SK-N-SH (cell line): ENCODE measurements at regions of chrX and their contacts with region 1.

Region 1: DNA sequence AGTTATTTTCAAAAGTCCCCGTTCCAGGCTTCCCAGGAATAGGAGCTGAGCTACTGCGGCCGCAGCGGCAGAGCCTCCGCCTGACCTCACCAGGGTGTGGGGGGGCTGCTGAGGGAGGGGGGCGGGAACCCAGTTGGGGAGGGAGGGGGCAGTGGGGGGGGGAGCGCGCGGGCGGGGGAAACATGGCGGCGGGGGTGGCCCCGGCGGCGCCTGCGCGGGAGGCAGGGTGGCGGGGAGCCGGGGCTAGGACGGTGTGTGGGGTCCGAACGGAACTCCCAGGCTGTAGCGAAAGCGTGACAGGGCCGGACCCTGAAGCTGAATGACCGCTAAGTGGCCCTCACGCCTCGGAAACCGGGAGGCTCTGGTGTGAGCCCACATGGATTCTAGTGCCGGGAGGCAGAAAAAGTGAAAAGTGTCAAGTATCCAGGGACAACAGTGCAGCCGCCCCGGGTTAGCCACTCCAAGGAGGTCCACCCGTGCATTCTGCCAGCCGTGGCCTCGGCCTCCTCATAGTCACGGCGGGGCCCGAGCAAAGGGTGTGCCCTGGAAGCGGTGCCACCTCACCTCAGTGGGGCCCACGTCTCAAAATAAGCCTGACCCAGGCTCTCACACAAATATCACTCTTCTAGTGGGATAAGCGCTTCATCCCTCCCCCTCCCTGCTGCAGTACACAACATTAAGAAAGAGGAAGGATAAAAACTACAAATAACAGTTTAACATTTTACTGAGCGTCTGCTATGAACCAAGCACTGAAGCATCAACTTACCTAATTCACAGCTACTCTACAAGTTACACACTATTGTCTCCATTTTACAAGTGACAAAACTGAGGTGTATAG is at the start of gene KLHL13:
- DNase-seq: peak; percentile 92
- H3K4me3 ChIP-seq: peak within 1 kb of the TSS; percentile 67 to 73
- H3K27ac ChIP-seq: peak within 1 kb of the TSS; percentile 78 to 94
- H3K4me1 ChIP-seq: peaks cover 0 to 5% of the 10 kb centered on the region in 2 experiments; a peak in 2 of 4 replicates
- H3K27me3 ChIP-seq: no peaks in the 10 kb centered on the region
- CTCF ChIP-seq: no peak
- EP300 ChIP-seq: no peak
- RAD21 ChIP-seq: peak; percentile 73
- polyA plus RNA-seq, gene KLHL13: 19.5 and 27.6 TPM in 2 replicates

Region 2: GRCh38 chrX:118088084-118088483 is 28.8 kb before region 1 on chrX:
- CTCF ChIA-PET with region 1: no interaction called
- POLR2A ChIA-PET with region 1: no interaction called
- DNase-seq: no peak
- H3K4me3 ChIP-seq: no peak overlapping the region
- H3K27ac ChIP-seq: no peak overlapping the region
- H3K4me1 ChIP-seq: peaks cover 0 to 3% of the 10 kb centered on the region in 2 experiments; a peak in 1 of 4 replicates
- H3K27me3 ChIP-seq: no peaks in the 10 kb centered on the region
- CTCF ChIP-seq: no peak
- EP300 ChIP-seq: no peak
- RAD21 ChIP-seq: no peak

Region 3: GRCh38 chrX:118226090-118226428 is 109.1 kb after region 1 on chrX:
- CTCF ChIA-PET with region 1: interaction called, 10 read pairs
- POLR2A ChIA-PET with region 1: interaction called, 10 read pairs
- DNase-seq: peak; percentile 35
- H3K4me3 ChIP-seq: peak overlapping the region in 1 of 2 experiments; percentile 30; a peak in 3 of 4 replicates
- H3K27ac ChIP-seq: peak overlapping the region; percentile 95 to 99
- H3K4me1 ChIP-seq: peaks cover 1 to 10% of the 10 kb centered on the region in 2 experiments; a peak in 3 of 4 replicates
- H3K27me3 ChIP-seq: no peaks in the 10 kb centered on the region
- CTCF ChIP-seq: peak; percentile 75
- EP300 ChIP-seq: no peak
- RAD21 ChIP-seq: peak; percentile 85